Colonic mucosa (tissue), 4 donors: ENCODE measurements at regions of chr13 and their contacts with region 1.

Region 1: DNA sequence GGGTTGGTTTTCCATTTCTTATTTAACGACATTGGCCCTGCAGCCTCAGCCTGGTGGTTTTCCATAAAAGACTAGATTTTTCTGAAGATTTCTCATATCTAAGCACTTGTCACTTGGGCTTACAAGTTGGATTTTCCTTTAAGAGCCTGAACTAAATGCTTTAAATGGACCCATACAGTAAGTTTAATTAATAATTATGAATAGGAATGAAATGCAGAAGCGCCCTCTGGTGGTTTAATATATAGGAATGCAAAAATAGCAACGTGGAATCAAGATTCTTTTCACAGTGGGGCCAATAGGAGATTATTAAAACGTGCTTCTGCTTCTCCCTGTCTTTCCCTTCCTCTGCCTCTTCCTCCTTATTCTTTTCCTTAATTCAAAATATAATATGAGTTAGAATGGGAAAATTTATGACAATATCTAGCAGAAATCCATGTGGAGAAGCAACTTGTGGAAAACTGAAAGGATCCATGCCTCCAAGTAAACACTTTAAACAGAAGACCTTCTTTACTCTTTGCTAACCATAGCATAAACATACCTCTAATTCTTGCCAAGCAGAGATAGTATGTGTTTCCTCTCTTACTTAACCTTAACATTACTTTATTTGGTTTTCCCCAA is 324.0 kb downstream of the GPC5 start:
- DNase-seq: no peak
- H3K4me3 ChIP-seq: no peak overlapping the region
- H3K27ac ChIP-seq: no peak overlapping the region
- H3K4me1 ChIP-seq: no peaks in the 10 kb centered on the region
- H3K27me3 ChIP-seq: no peaks in the 10 kb centered on the region
- CTCF ChIP-seq: peak; percentile 65

Region 2: GRCh38 chr13:91381371-91381770 is 341.0 kb before region 1 on chr13:
- intact Hi-C with region 1: loop called (anchors 5 kb)
- DNase-seq: no peak
- H3K4me3 ChIP-seq: no peak overlapping the region
- H3K27ac ChIP-seq: no peak overlapping the region
- H3K4me1 ChIP-seq: no peaks in the 10 kb centered on the region
- H3K27me3 ChIP-seq: no peaks in the 10 kb centered on the region
- CTCF ChIP-seq: no peak

Region 3: DNA sequence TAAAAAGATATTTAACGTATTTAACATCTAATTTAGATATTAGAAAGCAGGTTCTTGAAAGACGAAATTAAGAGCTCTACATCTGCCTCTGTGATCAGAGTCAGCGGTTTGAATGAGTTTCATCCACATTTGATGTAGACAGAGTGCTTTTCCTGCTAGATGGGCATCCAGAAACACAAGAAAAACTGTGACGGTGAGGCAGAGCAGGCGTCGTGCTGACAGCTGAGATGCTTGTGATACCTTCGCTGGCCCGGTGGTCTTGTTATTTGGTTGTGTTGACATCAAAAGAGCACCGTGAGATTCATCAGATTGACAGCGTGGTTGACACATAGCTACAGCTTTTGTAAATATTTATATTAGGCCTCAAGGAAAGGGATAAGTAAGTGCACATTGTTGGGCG is 75.2 kb after region 1 on chr13:
- intact Hi-C with region 1: no loop called
- DNase-seq: no peak
- H3K4me3 ChIP-seq: no peak overlapping the region
- H3K27ac ChIP-seq: no peak overlapping the region
- H3K4me1 ChIP-seq: no peaks in the 10 kb centered on the region
- H3K27me3 ChIP-seq: no peaks in the 10 kb centered on the region
- CTCF ChIP-seq: no peak